AG04449 (cell line): ENCODE measurements at regions of chr15 and their contacts with region 1.

Region 1: DNA sequence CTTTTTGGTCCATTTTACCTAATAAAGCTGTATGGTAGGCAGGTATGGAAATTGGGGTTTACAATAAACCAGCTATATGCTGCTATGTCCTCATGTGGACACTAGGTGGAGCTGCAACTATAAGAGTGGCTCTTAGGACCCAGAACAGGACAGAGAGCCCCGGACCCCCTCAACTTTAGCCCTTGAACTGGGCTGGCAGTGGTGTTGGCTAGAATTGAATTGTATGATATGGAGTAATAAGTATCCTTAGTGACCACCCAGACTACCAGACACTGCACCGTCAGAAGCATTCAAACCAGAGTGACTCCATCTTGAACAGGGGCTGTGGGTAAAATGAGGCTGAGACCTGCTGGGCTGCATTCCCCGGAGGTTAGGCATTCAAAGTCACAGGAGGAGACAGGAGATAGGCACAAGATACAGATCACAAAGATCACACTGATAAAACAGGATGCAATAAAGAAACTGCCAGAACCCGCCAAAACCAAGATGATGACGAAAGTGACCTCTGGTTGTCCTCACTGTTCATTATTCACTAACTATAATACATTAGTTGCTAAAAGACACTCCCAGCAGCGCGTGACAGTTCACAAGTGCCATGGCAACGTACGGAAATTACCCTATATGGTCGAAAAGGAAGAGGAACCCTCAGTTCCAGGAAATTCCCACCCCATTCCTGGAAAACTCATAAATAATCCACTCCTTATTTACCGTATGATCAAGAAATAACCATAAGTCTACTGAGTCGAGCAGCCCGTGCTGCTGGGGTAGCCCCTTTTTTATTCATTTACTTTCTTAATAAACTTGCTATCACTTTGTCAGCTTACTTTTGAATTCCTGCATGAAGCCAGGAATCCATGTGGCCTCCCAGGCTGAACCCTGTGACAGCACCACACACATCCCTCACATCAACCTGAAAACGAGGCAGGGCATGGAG is 68.7 kb upstream of the BLM start:
- DNase-seq: no peak
- H3K4me3 ChIP-seq: no peak overlapping the region
- CTCF ChIP-seq: peak; percentile 78

Region 2: DNA sequence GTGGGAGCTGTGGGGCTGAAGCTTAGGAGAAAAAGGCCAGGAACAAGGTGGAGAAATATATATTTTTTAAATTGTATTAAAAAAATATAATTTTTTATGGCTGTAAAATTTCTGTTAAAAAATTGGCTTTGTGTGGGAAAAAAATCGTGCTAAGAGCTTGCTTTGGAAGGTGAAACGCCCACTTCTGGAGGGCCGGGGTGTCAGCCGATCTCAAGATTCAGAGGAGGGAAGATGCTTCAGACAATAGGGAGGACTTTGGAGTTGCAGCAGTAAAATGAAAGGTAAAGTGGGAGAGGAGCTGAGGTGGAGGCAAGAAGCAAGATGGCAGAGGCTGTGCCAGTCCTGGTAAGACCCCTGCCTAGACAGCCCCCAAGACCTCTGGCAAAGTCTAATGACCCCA is 22.8 kb after region 1 on chr15:
- CTCF ChIA-PET with region 1: interaction called, 13 read pairs
- POLR2A ChIA-PET with region 1: no interaction called
- DNase-seq: no peak
- H3K4me3 ChIP-seq: no peak overlapping the region
- CTCF ChIP-seq: no peak

Region 3: GRCh38 chr15:90686435-90687218 is 38.2 kb after region 1 on chr15:
- CTCF ChIA-PET with region 1: interaction called, 13 read pairs
- POLR2A ChIA-PET with region 1: no interaction called
- DNase-seq: no peak
- H3K4me3 ChIP-seq: no peak overlapping the region
- CTCF ChIP-seq: no peak

Region 4: DNA sequence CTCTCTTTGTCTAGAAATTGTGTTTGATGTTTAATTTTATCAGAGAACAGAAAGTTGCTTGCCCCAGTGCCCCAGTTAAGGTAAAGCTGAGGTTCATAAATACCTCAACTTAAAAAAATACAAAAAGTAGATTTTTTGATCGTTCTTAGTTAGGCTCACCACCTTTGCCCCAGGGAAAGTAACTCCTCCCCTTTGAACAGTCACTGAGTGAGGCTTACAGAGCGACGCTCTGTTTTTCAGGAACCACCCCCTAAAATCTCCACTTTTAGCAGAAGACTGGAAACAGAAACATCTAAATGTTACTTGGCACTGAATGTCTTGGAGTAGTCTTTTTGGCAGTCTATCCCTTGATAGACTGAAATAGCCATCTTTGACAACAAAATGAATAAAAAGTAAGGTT is 93.7 kb after region 1 on chr15:
- CTCF ChIA-PET with region 1: no interaction called
- POLR2A ChIA-PET with region 1: no interaction called
- DNase-seq: no peak
- H3K4me3 ChIP-seq: no peak overlapping the region
- CTCF ChIP-seq: no peak

Region 5: GRCh38 chr15:90895336-90896117 is 247.1 kb after region 1 on chr15:
- CTCF ChIA-PET with region 1: interaction called, 12 read pairs
- POLR2A ChIA-PET with region 1: no interaction called
- DNase-seq: no peak
- H3K4me3 ChIP-seq: no peak overlapping the region
- CTCF ChIP-seq: no peak